ENCODE measurements at regions of chr20 and their contacts with region 1.

Region 1: DNA sequence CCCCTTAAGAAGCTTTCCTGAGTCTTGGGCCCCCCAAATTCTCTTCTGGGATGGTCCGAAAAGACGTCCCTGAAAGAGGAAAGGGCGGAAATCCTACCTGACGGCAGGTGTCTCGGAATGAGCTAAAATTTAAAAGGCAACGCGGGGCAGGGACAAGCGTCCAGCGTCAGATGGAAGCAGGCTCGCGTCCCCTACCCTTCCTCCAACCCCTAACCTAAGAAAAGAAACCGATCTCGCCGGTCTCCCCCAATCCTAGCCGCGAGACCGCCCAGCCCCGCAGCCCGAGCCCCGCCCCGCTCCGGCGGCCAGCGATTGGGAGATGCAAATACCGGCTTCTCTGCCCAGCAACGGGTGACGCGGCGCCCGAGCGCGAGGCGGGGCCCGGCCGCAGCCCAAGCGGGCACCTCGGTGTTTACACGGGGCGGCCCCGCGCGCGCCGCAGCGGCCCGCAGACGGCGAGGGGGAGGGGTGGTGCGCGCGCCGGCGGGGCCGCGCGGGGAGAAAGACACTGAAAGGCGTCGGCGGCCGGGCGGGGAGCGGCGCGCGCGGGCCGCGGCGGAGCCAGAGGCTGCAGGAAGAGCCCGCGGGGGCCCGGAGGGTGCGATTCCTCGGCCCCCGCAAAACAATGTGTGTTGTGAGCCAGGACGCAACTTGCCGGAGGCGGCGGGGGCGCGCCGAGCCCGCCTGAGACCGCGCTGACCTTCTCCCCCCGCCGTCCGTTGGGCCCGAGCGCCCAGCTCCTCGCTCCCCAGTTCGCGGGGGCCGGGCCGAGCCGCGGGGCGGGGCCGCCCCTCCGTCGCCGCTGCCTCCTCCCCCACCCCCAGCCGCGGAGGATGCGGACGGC is at the start of gene SOX12:
- DNase-seq: peak; percentile 87
- ATAC-seq: peak; percentile 65
- H3K4me3 ChIP-seq: peak within 1 kb of the TSS; percentile 94
- H3K27ac ChIP-seq: peak within 1 kb of the TSS; percentile 97
- H3K4me1 ChIP-seq: peaks cover 16% of the 10 kb centered on the region
- H3K27me3 ChIP-seq: no peaks in the 10 kb centered on the region
- CTCF ChIP-seq: no peak
- POLR2A ChIP-seq: peak; percentile 70
- RAD21 ChIP-seq: no peak
- total RNA-seq, gene SOX12: 1.1 TPM in 2 replicates

Region 2: DNA sequence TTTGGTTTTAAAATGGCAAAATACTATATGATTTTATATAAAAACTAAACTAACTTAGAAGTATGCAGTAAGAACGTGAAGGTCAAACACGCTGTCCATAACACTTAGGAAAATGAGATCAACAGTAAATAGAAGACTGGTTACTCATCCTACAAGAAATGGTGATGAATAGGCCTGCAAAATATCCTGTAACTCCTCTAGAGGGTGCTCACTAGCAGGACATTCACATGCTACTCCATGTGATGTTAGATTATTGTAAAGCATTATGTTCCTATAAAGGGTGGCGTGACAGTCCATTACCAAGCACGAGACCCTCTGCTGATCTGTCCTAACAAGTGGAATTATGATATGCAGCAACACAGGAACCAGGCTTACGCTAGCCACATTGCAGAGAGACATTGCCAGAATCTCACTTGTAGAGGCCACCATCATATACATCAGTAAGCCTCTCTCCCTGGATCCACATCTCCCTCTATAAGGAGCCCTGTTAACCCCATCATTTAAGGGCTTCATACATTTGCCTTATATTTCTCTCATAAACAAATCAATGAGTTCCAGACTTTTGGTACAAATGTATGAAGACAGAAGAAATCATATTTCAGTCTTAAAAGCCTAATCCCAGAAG is 116.2 kb before region 1 on chr20:
- CTCF ChIA-PET with region 1: interaction called, 4 read pairs
- POLR2A ChIA-PET with region 1: interaction called, 13 read pairs
- dilution Hi-C with region 1: no loop called
- in situ Hi-C with region 1: loop called (anchors 10 kb)
- intact Hi-C with region 1: loop called (anchors 1 kb)
- DNase-seq: peak; percentile 79
- ATAC-seq: peak; percentile 98
- H3K4me3 ChIP-seq: no peak overlapping the region
- H3K27ac ChIP-seq: no peak overlapping the region
- H3K4me1 ChIP-seq: no peaks in the 10 kb centered on the region
- H3K27me3 ChIP-seq: peaks cover 10% of the 10 kb centered on the region
- CTCF ChIP-seq: peak; percentile 70
- POLR2A ChIP-seq: no peak
- RAD21 ChIP-seq: peak; percentile 71

Region 3: GRCh38 chr20:297098-297924 is 28.0 kb before region 1 on chr20 and contains the start of gene ZCCHC3:
- CTCF ChIA-PET with region 1: interaction called, 4 read pairs
- POLR2A ChIA-PET with region 1: interaction called, 3 read pairs
- dilution Hi-C with region 1: no loop called
- in situ Hi-C with region 1: no loop called
- intact Hi-C with region 1: loop called (anchors 1 kb)
- DNase-seq: peak; percentile 93
- ATAC-seq: peak; percentile 90
- H3K4me3 ChIP-seq: peak within 1 kb of the TSS; percentile 100
- H3K27ac ChIP-seq: peak within 1 kb of the TSS; percentile 99
- H3K4me1 ChIP-seq: peaks cover 14% of the 10 kb centered on the region
- H3K27me3 ChIP-seq: no peaks in the 10 kb centered on the region
- CTCF ChIP-seq: 0 out of 2 replicates have a peak, but pooled peaks have one; percentile 30
- POLR2A ChIP-seq: peak; percentile 85
- RAD21 ChIP-seq: peak; percentile 29; the same call in 1 of the 2 replicates
- total RNA-seq, gene ZCCHC3: 10.9 and 13.9 TPM in 2 replicates

Region 4: GRCh38 chr20:362271-363254 is 37.3 kb after region 1 on chr20:
- CTCF ChIA-PET with region 1: no interaction called
- POLR2A ChIA-PET with region 1: no interaction called
- dilution Hi-C with region 1: no loop called
- in situ Hi-C with region 1: no loop called
- intact Hi-C with region 1: no loop called
- DNase-seq: peak; percentile 83
- ATAC-seq: peak; percentile 25; the same call in 1 of the 2 replicates
- H3K4me3 ChIP-seq: no peak overlapping the region
- H3K27ac ChIP-seq: peak overlapping the region; percentile 15; the same call in 1 of the 2 replicates
- H3K4me1 ChIP-seq: peaks cover 26% of the 10 kb centered on the region
- H3K27me3 ChIP-seq: no peaks in the 10 kb centered on the region
- CTCF ChIP-seq: peak; percentile 45
- POLR2A ChIP-seq: no peak
- RAD21 ChIP-seq: peak; percentile 36; the same call in 1 of the 2 replicates

Region 5: GRCh38 chr20:444862-445426 is 119.7 kb after region 1 on chr20:
- CTCF ChIA-PET with region 1: no interaction called
- POLR2A ChIA-PET with region 1: no interaction called
- dilution Hi-C with region 1: no loop called
- in situ Hi-C with region 1: no loop called
- intact Hi-C with region 1: no loop called
- DNase-seq: peak; percentile 60
- ATAC-seq: peak; percentile 72
- H3K4me3 ChIP-seq: no peak overlapping the region
- H3K27ac ChIP-seq: peak overlapping the region; percentile 10; the same call in 1 of the 2 replicates
- H3K4me1 ChIP-seq: peaks cover 5% of the 10 kb centered on the region
- H3K27me3 ChIP-seq: no peaks in the 10 kb centered on the region
- CTCF ChIP-seq: no peak
- POLR2A ChIP-seq: no peak
- RAD21 ChIP-seq: no peak

Measured in IMR-90 (cell line).